ENCODE measurements at regions of chr2 and their contacts with region 1.

Region 1: GRCh38 chr2:203225423-203226039 is 13.3 kb upstream of the CYP20A1 start:
- DNase-seq: no peak
- ATAC-seq: peak in 1 of 2 donors; percentile 26

Region 2: DNA sequence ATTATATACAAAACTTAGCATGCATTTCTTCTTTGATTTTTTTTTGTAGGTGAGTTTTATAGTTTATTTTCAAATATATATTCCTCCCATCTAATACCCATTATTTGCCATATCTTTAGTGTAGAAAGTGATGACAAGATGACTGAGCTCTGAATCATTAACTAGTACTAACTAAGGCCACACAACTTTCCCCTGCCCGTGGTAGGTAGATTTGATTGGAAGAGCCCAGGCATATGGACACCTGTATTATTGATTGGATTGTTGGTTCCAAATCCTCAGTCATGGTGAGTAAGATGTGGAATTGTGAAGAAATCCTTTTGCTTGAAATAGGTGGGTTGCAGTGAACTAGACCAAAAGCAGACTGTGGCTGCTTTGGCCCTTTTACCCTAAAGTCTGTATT is 157.5 kb after region 1 on chr2:
- intact Hi-C with region 1: no loop called
- DNase-seq: no peak
- ATAC-seq: no peak

Region 3: GRCh38 chr2:203453858-203454451 is 228.4 kb after region 1 on chr2:
- intact Hi-C with region 1: loop called in 1 of 2 experiments (anchors 5 kb)
- DNase-seq: no peak
- ATAC-seq: peak; percentile 61 to 65

Measured in left cardiac atrium (tissue), 4 donors.